ENCODE measurements at regions of chr2 and their contacts with region 1.

Region 1: DNA sequence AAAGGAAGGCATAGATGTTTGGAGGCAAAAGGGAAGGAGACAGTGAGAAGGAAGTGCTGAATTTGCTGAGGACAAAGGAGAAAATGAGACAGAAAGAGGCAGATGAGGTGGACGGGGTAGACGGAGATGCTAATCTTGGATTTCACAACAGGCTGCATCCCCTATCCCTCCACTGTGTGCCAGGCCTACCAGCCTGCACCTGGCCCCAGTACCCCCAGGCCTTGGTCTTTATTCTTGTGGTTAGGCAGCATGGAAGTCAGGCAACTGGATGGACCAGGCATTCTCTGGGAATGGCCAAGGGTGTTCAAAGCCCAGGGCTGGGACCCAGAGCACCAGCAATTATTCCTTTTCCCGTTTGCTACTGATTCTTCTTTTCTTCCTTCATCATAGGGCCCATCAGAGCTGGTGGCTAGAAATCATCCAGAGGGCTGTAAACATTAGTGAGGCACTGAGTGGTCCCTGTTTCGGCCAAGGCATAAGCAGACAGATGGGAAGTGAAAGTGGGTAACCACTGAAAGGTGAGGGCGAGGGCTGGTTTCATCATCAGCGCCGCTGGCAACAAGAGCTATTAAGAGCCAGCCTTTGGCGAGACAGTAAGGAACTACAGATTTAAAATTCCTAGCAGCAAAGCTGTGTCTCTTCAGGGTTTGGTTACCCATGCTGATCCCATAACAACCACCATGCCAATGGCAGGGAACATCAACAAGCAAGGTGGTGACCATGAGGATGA is 9.3 kb upstream of the SLC20A1 start:
- DNase-seq: no peak
- ATAC-seq: no peak
- H3K4me3 ChIP-seq: no peak overlapping the region
- H3K4me3 Mint-ChIP-seq: peak overlapping the region in 6 of 10 donors; percentile 1 to 73 (median 35)
- H3K27ac ChIP-seq: no peak overlapping the region
- H3K27ac Mint-ChIP-seq: peak overlapping the region in 6 of 9 donors; percentile 16 to 95 (median 82)
- H3K4me1 ChIP-seq: peaks cover 50 to 59% of the 10 kb centered on the region in 2 donors
- H3K4me1 Mint-ChIP-seq: peaks cover 44 to 81% (median 55%) of the 10 kb centered on the region in 7 donors
- H3K27me3 ChIP-seq: no peaks in the 10 kb centered on the region
- H3K27me3 Mint-ChIP-seq: no peaks in the 10 kb centered on the region

Region 2: GRCh38 chr2:112706170-112706664 is 69.8 kb after region 1 on chr2:
- CTCF ChIA-PET with region 1: no interaction called
- POLR2A ChIA-PET with region 1: interaction called, 9 read pairs
- intact Hi-C with region 1: loop called in 1 of 2 experiments (anchors 5 kb)
- DNase-seq: peak in 4 of 9 donors; percentile 13 to 73 (median 32)
- ATAC-seq: peak; percentile 88
- H3K4me3 ChIP-seq: no peak overlapping the region
- H3K4me3 Mint-ChIP-seq: peak overlapping the region in 4 of 10 donors; percentile 22 to 76 (median 46)
- H3K27ac ChIP-seq: no peak overlapping the region
- H3K27ac Mint-ChIP-seq: peak overlapping the region in 3 of 9 donors; percentile 10 to 78 (median 60)
- H3K4me1 ChIP-seq: peaks cover 0 to 15% of the 10 kb centered on the region in 2 donors
- H3K4me1 Mint-ChIP-seq: peaks cover 7 to 57% (median 13%) of the 10 kb centered on the region in 7 donors
- H3K27me3 ChIP-seq: no peaks in the 10 kb centered on the region
- H3K27me3 Mint-ChIP-seq: peaks cover 0 to 12% (median 8%) of the 10 kb centered on the region in 5 donors

Measured in naive thymus-derived CD4-positive, alpha-beta T cell (primary cell).